ENCODE measurements at regions of chr13 and their contacts with region 1.

Region 1: DNA sequence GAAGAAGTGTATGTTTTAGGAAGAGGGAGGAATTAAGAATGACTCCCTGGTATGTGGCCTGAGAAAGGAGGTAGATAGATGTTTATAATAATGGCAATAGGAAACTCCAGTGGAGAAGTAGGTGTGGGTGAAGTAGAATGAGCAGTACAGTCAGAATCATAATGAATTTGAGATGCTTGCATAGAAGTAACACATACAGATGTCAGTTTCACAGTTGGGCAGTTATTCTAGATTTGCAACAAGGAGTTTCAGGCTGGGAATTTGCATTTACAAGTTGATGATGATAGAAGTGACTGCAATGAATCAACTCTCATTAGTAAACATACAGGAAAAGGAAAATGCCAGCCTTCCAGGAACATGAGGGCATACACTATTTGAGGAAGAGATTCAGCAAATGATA is 149.0 kb downstream of the SLITRK1 start:
- DNase-seq: no peak
- H3K4me3 ChIP-seq: no peak overlapping the region
- H3K4me3 Mint-ChIP-seq: no peak overlapping the region
- H3K27ac ChIP-seq: no peak overlapping the region
- H3K27ac Mint-ChIP-seq: no peak overlapping the region
- H3K4me1 ChIP-seq: no peaks in the 10 kb centered on the region
- H3K4me1 Mint-ChIP-seq: no peaks in the 10 kb centered on the region
- H3K27me3 ChIP-seq: no peaks in the 10 kb centered on the region
- H3K27me3 Mint-ChIP-seq: no peaks in the 10 kb centered on the region

Region 2: DNA sequence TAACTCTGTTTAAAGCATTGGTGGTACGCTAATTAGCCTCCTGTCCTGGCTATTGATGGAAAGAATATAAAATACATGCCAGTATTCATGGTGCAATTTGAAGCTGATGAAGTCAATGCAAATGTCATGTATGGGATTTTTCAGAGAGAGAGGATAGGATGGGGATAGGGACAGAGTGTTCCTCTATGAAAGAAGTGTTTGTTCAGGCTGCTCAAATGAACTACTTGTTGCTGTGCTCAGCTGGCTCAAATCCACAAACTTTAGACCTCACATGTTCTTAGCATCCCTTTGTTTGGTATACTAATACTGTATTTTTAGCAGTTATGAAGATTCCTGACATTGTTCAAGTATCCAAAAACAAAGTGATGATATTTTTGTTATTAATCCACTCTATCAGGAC is 32.5 kb after region 1 on chr13:
- CTCF ChIA-PET with region 1: no interaction called
- POLR2A ChIA-PET with region 1: no interaction called
- intact Hi-C with region 1: loop called (anchors 2 kb)
- DNase-seq: no peak
- H3K4me3 ChIP-seq: no peak overlapping the region
- H3K4me3 Mint-ChIP-seq: no peak overlapping the region
- H3K27ac ChIP-seq: no peak overlapping the region
- H3K27ac Mint-ChIP-seq: no peak overlapping the region
- H3K4me1 ChIP-seq: no peaks in the 10 kb centered on the region
- H3K4me1 Mint-ChIP-seq: no peaks in the 10 kb centered on the region
- H3K27me3 ChIP-seq: no peaks in the 10 kb centered on the region
- H3K27me3 Mint-ChIP-seq: no peaks in the 10 kb centered on the region

Measured in CD4-positive, alpha-beta memory T cell (primary cell).